ENCODE measurements at regions of chr20 and their contacts with region 1.

Region 1: GRCh38 chr20:32249030-32249738 is 28.3 kb upstream of the KIF3B start:
- DNase-seq: peak; percentile 67
- ATAC-seq: peak; percentile 65
- H3K4me3 Mint-ChIP-seq: peak overlapping the region; percentile 15
- H3K27ac Mint-ChIP-seq: peak overlapping the region; percentile 97
- H3K4me1 Mint-ChIP-seq: peaks cover 60% of the 10 kb centered on the region
- H3K27me3 Mint-ChIP-seq: no peaks in the 10 kb centered on the region
- CTCF ChIP-seq: no peak

Region 2: DNA sequence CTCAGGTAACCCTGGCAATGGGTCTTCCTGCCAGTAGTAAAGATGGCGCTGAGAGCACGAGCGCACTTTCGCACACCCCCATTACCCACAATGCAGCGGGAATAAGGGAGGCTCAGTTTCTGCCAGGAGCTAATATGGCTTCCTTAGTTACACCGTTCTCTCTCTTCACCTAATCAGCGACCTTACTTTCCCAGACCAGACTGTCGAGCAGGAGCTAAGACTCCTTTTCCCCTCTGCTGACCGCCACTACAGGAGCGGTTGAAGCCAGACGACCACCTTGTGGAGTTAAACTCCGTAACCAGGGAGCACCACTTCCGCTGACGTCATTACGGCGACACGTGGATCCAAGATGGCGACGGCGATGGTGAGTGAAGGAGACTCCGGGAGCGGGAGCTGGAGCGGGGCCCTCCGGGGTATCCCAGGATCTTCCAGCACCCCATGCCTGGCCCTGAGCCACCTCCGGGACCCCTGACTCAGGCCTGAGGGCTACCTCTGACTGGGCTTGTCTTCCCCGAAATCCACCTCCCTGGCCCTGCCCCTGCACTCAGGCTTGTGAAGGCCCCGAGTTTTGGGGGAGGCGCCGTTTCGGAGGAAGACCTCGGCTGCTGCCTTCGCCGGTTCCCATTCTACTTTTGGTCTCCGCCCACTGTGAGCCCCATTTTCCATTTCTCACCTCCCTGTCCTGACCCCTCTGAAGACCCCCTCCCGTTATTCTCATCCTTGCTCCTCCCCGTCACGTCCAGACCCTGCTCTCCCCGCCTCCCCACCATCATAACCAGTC is 139.6 kb before region 1 on chr20 and contains the start of gene TM9SF4:
- CTCF ChIA-PET with region 1: no interaction called
- POLR2A ChIA-PET with region 1: no interaction called
- intact Hi-C with region 1: no loop called
- DNase-seq: peak; percentile 94
- ATAC-seq: peak; percentile 86
- H3K4me3 Mint-ChIP-seq: peak within 1 kb of the TSS; percentile 99
- H3K27ac Mint-ChIP-seq: peak within 1 kb of the TSS; percentile 100
- H3K4me1 Mint-ChIP-seq: peaks cover 38% of the 10 kb centered on the region
- H3K27me3 Mint-ChIP-seq: no peaks in the 10 kb centered on the region
- CTCF ChIP-seq: no peak
- total RNA-seq, gene TM9SF4: 36.5 to 39.5 TPM

Region 3: DNA sequence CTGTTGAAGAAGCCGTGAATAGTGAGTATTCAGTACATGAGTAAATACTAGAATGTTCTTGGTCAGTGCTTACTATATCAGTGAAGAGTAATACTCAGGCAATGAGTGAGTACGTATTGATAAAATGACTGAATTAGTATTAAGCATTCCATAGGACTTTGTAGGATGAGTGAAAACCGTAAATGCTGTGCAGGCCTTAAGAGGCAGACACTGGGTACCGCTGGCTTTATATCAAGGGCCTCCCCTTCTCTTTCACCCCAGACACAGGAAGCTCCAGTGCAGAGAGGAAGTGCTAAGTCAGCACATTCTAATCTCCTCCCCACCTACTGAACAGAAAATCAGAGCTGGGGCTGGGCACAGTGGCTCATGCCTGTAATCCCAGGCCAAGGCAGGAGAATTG is 17.3 kb before region 1 on chr20:
- CTCF ChIA-PET with region 1: interaction called, 7 read pairs
- POLR2A ChIA-PET with region 1: interaction called, 11 read pairs
- intact Hi-C with region 1: loop called (anchors 2 kb)
- DNase-seq: peak; percentile 63
- ATAC-seq: peak; percentile 87
- H3K4me3 Mint-ChIP-seq: peak overlapping the region; percentile 54
- H3K27ac Mint-ChIP-seq: peak overlapping the region; percentile 97
- H3K4me1 Mint-ChIP-seq: peaks cover 38% of the 10 kb centered on the region
- H3K27me3 Mint-ChIP-seq: no peaks in the 10 kb centered on the region
- CTCF ChIP-seq: no peak

Region 4: GRCh38 chr20:32277361-32278198 is 28.4 kb after region 1 on chr20 and contains the start of gene KIF3B:
- CTCF ChIA-PET with region 1: no interaction called
- POLR2A ChIA-PET with region 1: interaction called, 16 read pairs
- intact Hi-C with region 1: no loop called
- DNase-seq: peak; percentile 93
- ATAC-seq: peak; percentile 88
- H3K4me3 Mint-ChIP-seq: peak within 1 kb of the TSS; percentile 98
- H3K27ac Mint-ChIP-seq: peak within 1 kb of the TSS; percentile 97
- H3K4me1 Mint-ChIP-seq: peaks cover 48% of the 10 kb centered on the region
- H3K27me3 Mint-ChIP-seq: no peaks in the 10 kb centered on the region
- CTCF ChIP-seq: no peak
- total RNA-seq, gene KIF3B: 25.4 to 25.7 TPM

Region 5: GRCh38 chr20:32296819-32297420 is 47.7 kb after region 1 on chr20:
- CTCF ChIA-PET with region 1: no interaction called
- POLR2A ChIA-PET with region 1: no interaction called
- intact Hi-C with region 1: no loop called
- DNase-seq: no peak
- ATAC-seq: no peak
- H3K4me3 Mint-ChIP-seq: no peak overlapping the region
- H3K27ac Mint-ChIP-seq: no peak overlapping the region
- H3K4me1 Mint-ChIP-seq: peaks cover 45% of the 10 kb centered on the region
- H3K27me3 Mint-ChIP-seq: no peaks in the 10 kb centered on the region
- CTCF ChIP-seq: no peak